Caco-2 (cell line): ENCODE measurements at regions of chr10 and their contacts with region 1.

Region 1: DNA sequence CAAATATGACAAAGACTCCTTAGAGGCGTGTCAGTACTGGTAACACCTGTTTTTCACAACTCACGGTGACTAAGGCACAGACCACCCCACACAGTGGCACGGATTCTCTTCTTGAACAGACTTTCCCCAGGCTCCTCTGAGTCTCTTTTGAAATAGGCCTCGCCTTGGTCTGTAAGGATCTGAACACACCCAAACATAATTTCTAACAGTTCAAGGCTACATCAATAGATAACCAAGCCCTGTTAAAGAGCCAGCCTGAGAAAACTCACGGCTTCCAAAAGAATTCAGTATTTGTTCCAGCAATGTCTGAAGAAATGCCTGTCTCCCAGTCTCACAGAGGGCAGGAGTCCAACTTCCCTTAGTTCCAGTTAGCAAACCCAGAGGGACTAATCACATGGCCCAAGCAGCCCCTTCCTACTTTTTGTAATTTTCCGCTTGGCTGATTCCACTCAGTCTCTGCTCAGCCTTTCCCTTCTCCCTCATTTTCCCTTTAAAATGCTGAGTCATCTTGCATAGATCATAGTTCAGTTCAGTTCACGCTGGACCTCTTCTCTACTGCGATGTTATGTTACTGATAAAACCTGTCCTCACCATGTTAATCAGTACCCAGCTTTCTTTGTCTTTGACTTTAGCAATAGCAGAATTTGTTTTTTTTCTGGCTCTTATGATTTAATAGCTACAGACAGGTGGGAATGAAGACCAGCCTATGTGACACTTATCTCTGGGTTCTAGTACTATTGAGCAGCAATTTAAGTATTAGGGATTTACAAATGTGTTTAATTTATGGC is 22.6 kb upstream of the AKR1C3 start:
- DNase-seq: peak; percentile 95 to 96
- H3K4me3 ChIP-seq: peak overlapping the region; percentile 2; the same call in 1 of the 2 replicates
- H3K4me3 Mint-ChIP-seq: peak overlapping the region; percentile 56
- H3K27ac Mint-ChIP-seq: peak overlapping the region; percentile 85
- H3K4me1 ChIP-seq: peaks cover 64% of the 10 kb centered on the region
- H3K4me1 Mint-ChIP-seq: peaks cover 52% of the 10 kb centered on the region
- H3K27me3 ChIP-seq: no peaks in the 10 kb centered on the region
- H3K27me3 Mint-ChIP-seq: no peaks in the 10 kb centered on the region
- CTCF ChIP-seq: no peak

Region 2: DNA sequence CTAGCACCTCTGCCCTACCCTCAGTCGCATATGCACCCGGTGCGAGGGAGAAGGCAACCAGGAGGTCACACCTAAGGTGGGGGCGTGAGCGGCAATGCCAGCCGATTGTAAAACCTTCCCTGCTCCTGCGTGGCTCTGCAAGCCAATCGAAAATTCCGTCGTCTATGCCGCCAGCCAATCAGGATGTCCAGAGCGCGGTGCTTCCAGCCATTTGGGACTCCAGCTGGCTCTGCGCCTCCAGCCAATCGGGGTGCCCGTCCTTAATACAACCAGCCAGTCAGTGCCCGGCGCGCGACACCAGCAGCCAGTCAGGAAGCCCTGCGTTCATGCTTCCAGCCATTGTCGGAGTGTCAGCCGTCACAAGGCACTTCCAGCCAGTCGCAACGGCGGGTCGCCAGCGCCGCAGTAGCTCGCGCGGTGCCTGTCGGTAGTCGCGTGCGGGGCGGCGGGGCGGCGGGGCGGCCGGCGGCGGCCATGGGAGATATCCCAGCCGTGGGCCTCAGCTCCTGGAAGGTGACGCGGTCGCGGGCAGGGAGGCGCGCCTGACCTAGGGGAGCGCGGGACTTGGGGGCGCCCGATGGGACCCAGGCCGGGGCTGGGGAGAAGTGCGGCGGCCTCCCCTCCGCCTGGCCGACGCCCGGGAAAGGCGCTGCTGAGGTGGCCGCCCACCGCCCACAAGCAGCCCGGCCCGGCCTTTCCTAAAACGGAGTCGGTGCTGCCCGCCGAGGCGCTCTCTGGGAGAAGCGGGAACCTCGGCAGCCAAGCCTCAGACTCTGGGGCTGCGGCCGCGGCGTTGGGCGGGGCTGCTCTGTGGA is 245.5 kb before region 1 on chr10 and contains the start of gene AKR1E2:
- CTCF ChIA-PET with region 1: no interaction called
- POLR2A ChIA-PET with region 1: interaction called, 3 read pairs
- intact Hi-C with region 1: loop called (anchors 1 kb)
- DNase-seq: peak; percentile 100
- H3K4me3 ChIP-seq: peak within 1 kb of the TSS; percentile 56
- H3K4me3 Mint-ChIP-seq: peak within 1 kb of the TSS; percentile 98
- H3K27ac Mint-ChIP-seq: peak within 1 kb of the TSS; percentile 94
- H3K4me1 ChIP-seq: peaks cover 19% of the 10 kb centered on the region
- H3K4me1 Mint-ChIP-seq: peaks cover 12% of the 10 kb centered on the region
- H3K27me3 ChIP-seq: no peaks in the 10 kb centered on the region
- H3K27me3 Mint-ChIP-seq: peaks cover 5% of the 10 kb centered on the region
- CTCF ChIP-seq: no peak
- total RNA-seq, gene AKR1E2: 68.3 and 68.5 TPM in 2 replicates

Region 3: DNA sequence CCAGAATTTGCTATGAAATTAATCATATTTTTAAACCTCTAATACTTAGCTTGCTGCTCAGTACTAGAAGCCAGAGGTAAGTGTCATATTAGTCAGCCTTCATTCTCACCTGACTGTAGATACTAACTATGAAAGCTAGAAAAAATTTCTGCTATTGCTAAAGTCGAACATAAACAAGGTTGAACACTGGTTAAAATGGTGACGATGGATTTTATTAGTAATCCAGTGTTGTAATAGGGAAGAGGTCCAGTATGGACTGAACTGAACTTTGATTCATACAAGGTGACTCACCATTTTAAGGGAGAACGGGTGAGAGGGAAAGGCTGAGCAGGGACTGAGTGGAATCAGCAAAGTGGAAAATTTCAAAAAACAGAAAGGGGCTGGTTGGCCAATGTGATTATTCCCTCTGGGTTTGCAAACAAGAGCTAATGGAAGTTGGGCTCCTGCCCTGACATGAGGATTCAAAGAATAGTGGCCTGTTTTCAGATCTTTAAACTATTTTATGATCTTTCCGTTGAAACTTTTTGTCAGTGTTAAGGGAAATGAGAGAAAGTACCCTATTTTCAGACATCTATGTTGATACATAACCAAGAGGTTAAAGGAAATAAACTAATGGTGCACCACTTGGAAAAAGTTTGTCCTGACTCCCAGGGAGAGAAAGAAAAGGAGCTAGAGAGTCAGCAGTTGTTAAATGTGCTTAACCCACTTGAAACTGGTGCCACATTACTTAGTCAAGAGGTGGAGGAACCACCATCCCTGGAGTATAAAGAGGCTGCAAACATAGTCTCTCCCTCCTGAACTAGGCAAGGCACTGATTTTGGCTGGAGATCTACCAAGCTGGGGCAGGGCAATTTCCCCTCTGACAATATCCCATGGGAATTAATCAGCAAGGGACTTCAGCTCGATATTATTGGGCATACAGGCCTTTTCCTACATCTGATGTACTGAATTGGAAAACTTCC is 123.7 kb before region 1 on chr10:
- CTCF ChIA-PET with region 1: no interaction called
- POLR2A ChIA-PET with region 1: no interaction called
- intact Hi-C with region 1: no loop called
- DNase-seq: peak; percentile 63 to 69
- H3K4me3 ChIP-seq: no peak overlapping the region
- H3K4me3 Mint-ChIP-seq: peak overlapping the region; percentile 42
- H3K27ac Mint-ChIP-seq: peak overlapping the region; percentile 85
- H3K4me1 ChIP-seq: peaks cover 51% of the 10 kb centered on the region
- H3K4me1 Mint-ChIP-seq: peaks cover 48% of the 10 kb centered on the region
- H3K27me3 ChIP-seq: no peaks in the 10 kb centered on the region
- H3K27me3 Mint-ChIP-seq: no peaks in the 10 kb centered on the region
- CTCF ChIP-seq: no peak

Region 4: GRCh38 chr10:5038703-5039102 is 32.9 kb before region 1 on chr10:
- CTCF ChIA-PET with region 1: no interaction called
- POLR2A ChIA-PET with region 1: no interaction called
- intact Hi-C with region 1: loop called (anchors 5 kb)
- DNase-seq: no peak
- H3K4me3 ChIP-seq: no peak overlapping the region
- H3K4me3 Mint-ChIP-seq: no peak overlapping the region
- H3K27ac Mint-ChIP-seq: no peak overlapping the region
- H3K4me1 ChIP-seq: no peaks in the 10 kb centered on the region
- H3K4me1 Mint-ChIP-seq: peaks cover 10% of the 10 kb centered on the region
- H3K27me3 ChIP-seq: no peaks in the 10 kb centered on the region
- H3K27me3 Mint-ChIP-seq: no peaks in the 10 kb centered on the region
- CTCF ChIP-seq: no peak

Region 5: DNA sequence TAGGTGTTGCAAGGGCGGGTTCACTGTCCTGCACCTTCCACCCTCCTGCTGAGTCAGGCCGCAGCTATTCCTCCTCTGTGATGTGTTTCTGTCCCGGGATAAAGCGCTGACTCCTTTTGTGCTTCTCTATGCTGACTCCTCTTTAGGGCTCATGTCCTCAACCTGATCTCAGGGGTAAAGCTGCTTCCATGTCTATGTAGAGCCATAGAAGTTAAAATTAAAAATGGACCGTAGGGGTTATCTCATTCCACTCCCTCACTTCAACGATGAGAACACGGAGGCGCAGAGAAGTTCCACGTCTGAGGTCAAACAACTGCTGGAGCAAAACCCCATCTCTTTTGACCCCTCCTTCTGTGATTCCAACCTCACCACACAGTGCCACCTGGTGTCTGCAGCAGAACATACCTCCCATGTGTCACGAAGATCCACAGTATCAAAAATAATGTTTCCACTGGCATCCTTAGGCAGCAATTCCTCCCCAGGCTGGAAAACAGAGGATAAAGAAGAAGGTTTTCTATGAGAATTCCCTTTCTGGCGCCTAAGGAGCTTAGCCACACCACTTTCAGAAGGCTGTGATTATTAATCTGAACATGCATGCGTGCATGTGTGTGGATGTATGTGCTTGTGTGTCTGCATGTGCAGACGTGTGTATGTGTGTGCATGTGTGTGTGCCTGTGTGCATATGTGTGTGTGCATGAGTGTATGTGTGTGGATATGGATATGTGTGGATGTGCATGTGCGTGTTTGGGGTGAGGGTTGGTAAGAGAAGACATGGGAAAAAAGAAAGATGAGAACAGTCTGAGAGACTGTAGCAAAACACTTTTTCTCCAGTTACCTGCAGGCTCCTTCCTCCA is 211.9 kb after region 1 on chr10:
- CTCF ChIA-PET with region 1: no interaction called
- POLR2A ChIA-PET with region 1: no interaction called
- intact Hi-C with region 1: loop called (anchors 1 kb)
- DNase-seq: peak; percentile 81 to 83
- H3K4me3 ChIP-seq: no peak overlapping the region
- H3K4me3 Mint-ChIP-seq: peak overlapping the region; percentile 50
- H3K27ac Mint-ChIP-seq: peak overlapping the region; percentile 22
- H3K4me1 ChIP-seq: no peaks in the 10 kb centered on the region; the same call in 1 of the 2 replicates
- H3K4me1 Mint-ChIP-seq: peaks cover 7% of the 10 kb centered on the region
- H3K27me3 ChIP-seq: no peaks in the 10 kb centered on the region
- H3K27me3 Mint-ChIP-seq: peaks cover 7% of the 10 kb centered on the region
- CTCF ChIP-seq: peak; percentile 88 to 92

Region 6: GRCh38 chr10:5737352-5737751 is 665.7 kb after region 1 on chr10:
- CTCF ChIA-PET with region 1: no interaction called
- POLR2A ChIA-PET with region 1: no interaction called
- intact Hi-C with region 1: no loop called
- DNase-seq: no peak
- H3K4me3 ChIP-seq: no peak overlapping the region
- H3K4me3 Mint-ChIP-seq: no peak overlapping the region
- H3K27ac Mint-ChIP-seq: peak overlapping the region; percentile 21
- H3K4me1 ChIP-seq: no peaks in the 10 kb centered on the region
- H3K4me1 Mint-ChIP-seq: no peaks in the 10 kb centered on the region
- H3K27me3 ChIP-seq: no peaks in the 10 kb centered on the region
- H3K27me3 Mint-ChIP-seq: no peaks in the 10 kb centered on the region
- CTCF ChIP-seq: peak; percentile 17 to 20